Prostate gland (tissue), 2 donors: ENCODE measurements at regions of chr7 and their contacts with region 1.

Region 1: GRCh38 chr7:70693686-70694360 is 438.1 kb upstream of the GALNT17 start:
- DNase-seq: peak; percentile 74
- H3K4me3 ChIP-seq: peak overlapping the region; percentile 83 to 84
- H3K27ac ChIP-seq: peak overlapping the region; percentile 81 to 85
- H3K4me1 ChIP-seq: no peaks in the 10 kb centered on the region
- H3K27me3 ChIP-seq: no peaks in the 10 kb centered on the region
- CTCF ChIP-seq: peak in 2 of 4 experiments; percentile 33 to 41
- POLR2A ChIP-seq: peak; percentile 89

Region 2: GRCh38 chr7:70040970-70041766 is 652.7 kb before region 1 on chr7:
- intact Hi-C with region 1: loop called (anchors 2 kb)
- DNase-seq: no peak
- H3K4me3 ChIP-seq: no peak overlapping the region
- H3K27ac ChIP-seq: no peak overlapping the region
- H3K4me1 ChIP-seq: no peaks in the 10 kb centered on the region
- H3K27me3 ChIP-seq: no peaks in the 10 kb centered on the region
- CTCF ChIP-seq: peak in 3 of 4 experiments; percentile 21 to 49 (median 40)
- POLR2A ChIP-seq: no peak

Region 3: GRCh38 chr7:70178787-70179186 is 515.0 kb before region 1 on chr7:
- intact Hi-C with region 1: loop called (anchors 10 kb)
- DNase-seq: peak; percentile 80
- H3K4me3 ChIP-seq: no peak overlapping the region
- H3K27ac ChIP-seq: no peak overlapping the region
- H3K4me1 ChIP-seq: no peaks in the 10 kb centered on the region
- H3K27me3 ChIP-seq: no peaks in the 10 kb centered on the region
- CTCF ChIP-seq: no peak
- POLR2A ChIP-seq: no peak

Region 4: DNA sequence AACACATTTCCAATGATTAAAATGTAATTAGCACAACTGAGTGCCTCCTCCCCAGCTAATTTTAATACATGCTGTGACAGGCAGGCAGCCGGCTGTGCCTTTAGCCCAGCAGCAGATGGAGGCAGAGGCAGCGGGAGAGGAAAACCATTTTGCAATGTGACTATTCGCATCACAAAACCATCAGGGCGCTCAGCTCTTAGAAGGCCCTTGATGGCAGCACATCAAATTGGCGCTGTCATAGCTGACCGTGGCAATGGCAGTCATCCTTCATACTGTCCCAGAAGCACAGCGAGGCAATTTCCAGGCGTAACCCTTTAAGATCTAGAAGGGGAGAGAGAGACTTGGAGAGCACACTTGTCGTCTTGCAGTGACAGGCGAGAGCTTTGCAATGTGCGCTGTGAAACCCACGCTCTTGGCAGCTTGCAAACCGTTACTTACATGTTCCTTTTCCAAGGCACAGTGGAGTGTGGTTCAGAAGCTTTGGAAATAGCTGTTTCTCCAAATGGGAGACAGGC is 276.6 kb before region 1 on chr7:
- intact Hi-C with region 1: no loop called
- DNase-seq: no peak
- H3K4me3 ChIP-seq: no peak overlapping the region
- H3K27ac ChIP-seq: no peak overlapping the region
- H3K4me1 ChIP-seq: no peaks in the 10 kb centered on the region
- H3K27me3 ChIP-seq: no peaks in the 10 kb centered on the region
- CTCF ChIP-seq: no peak
- POLR2A ChIP-seq: no peak

Region 5: DNA sequence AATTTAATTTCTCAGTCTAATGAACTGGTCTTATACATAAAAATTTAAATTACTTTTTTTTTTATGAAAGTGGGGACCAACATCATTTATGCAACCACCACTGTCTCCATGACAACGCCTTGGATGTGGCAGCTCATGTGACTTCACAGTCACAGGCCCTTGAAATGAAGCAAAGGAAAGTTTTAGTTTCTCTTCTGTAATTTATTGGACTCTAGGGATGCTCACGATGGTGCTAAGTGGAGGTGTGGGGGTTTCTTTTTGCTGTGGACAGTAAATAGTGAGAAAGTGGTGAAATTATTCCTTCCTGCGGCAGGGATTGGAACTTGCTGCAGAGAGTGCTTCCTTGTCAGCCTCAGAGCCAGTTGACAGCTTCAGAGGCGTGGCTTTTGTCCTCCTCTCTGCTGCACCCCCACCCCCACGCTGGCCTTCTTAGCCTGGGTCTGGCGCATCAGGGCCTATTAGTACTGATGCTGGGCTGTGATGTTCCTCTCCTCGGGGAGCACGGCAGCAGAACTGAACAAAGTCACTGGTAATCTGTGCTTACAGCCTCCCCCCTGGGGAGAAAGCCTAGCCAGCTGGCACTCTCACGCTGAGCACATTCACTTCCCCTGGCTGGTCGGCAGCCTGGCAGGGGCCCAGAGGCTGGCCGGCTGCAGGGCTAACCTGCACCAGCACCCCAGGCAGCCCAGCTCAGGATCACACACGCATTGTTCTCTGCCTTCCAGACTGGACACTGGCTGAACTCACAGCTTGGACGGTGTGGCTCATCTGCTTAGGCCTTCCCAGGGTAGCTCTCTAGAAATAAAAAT is 79.4 kb before region 1 on chr7:
- intact Hi-C with region 1: loop called (anchors 5 kb)
- DNase-seq: peak; percentile 68
- H3K4me3 ChIP-seq: no peak overlapping the region
- H3K27ac ChIP-seq: peak overlapping the region; percentile 9 to 22
- H3K4me1 ChIP-seq: no peaks in the 10 kb centered on the region
- H3K27me3 ChIP-seq: no peaks in the 10 kb centered on the region
- CTCF ChIP-seq: no peak
- POLR2A ChIP-seq: no peak